ENCODE measurements at regions of chr22 and their contacts with region 1.

Region 1: GRCh38 chr22:39532215-39533071 is at the start of gene RPS19BP1:
- DNase-seq: peak; percentile 100
- ATAC-seq: peak; percentile 84
- H3K4me3 Mint-ChIP-seq: peak within 1 kb of the TSS; percentile 93
- H3K27ac Mint-ChIP-seq: peak within 1 kb of the TSS; percentile 93
- H3K4me1 Mint-ChIP-seq: peaks cover 59% of the 10 kb centered on the region
- H3K27me3 Mint-ChIP-seq: no peaks in the 10 kb centered on the region
- total RNA-seq, gene RPS19BP1: 64.8 to 81.6 TPM

Region 2: GRCh38 chr22:39170825-39171622 is 361.4 kb before region 1 on chr22:
- CTCF ChIA-PET with region 1: interaction called, 21 read pairs
- DNase-seq: peak; percentile 87
- ATAC-seq: peak; percentile 82
- H3K4me3 Mint-ChIP-seq: peak overlapping the region; percentile 36
- H3K27ac Mint-ChIP-seq: peak overlapping the region; percentile 70
- H3K4me1 Mint-ChIP-seq: peaks cover 36% of the 10 kb centered on the region
- H3K27me3 Mint-ChIP-seq: peaks cover 23% of the 10 kb centered on the region

Region 3: GRCh38 chr22:39490135-39490798 is 42.2 kb before region 1 on chr22:
- CTCF ChIA-PET with region 1: interaction called, 251 read pairs
- DNase-seq: peak; percentile 88
- ATAC-seq: peak; percentile 99
- H3K4me3 Mint-ChIP-seq: no peak overlapping the region
- H3K27ac Mint-ChIP-seq: no peak overlapping the region
- H3K4me1 Mint-ChIP-seq: peaks cover 18% of the 10 kb centered on the region
- H3K27me3 Mint-ChIP-seq: no peaks in the 10 kb centered on the region

Region 4: GRCh38 chr22:39514373-39514973 is 18.0 kb before region 1 on chr22:
- CTCF ChIA-PET with region 1: interaction called, 37 read pairs
- DNase-seq: peak; percentile 68
- ATAC-seq: no peak
- H3K4me3 Mint-ChIP-seq: no peak overlapping the region
- H3K27ac Mint-ChIP-seq: no peak overlapping the region
- H3K4me1 Mint-ChIP-seq: peaks cover 34% of the 10 kb centered on the region
- H3K27me3 Mint-ChIP-seq: no peaks in the 10 kb centered on the region

Region 5: GRCh38 chr22:39543095-39543494 is 10.7 kb after region 1 on chr22:
- CTCF ChIA-PET with region 1: interaction called, 30 read pairs
- DNase-seq: no peak
- ATAC-seq: peak; percentile 42
- H3K4me3 Mint-ChIP-seq: no peak overlapping the region
- H3K27ac Mint-ChIP-seq: no peak overlapping the region
- H3K4me1 Mint-ChIP-seq: peaks cover 14% of the 10 kb centered on the region
- H3K27me3 Mint-ChIP-seq: peaks cover 37% of the 10 kb centered on the region

Region 6: GRCh38 chr22:39943337-39943736 is 410.9 kb after region 1 on chr22:
- CTCF ChIA-PET with region 1: interaction called, 11 read pairs
- DNase-seq: peak; percentile 62
- ATAC-seq: peak; percentile 17
- H3K4me3 Mint-ChIP-seq: peak overlapping the region; percentile 43
- H3K27ac Mint-ChIP-seq: peak overlapping the region; percentile 88
- H3K4me1 Mint-ChIP-seq: peaks cover 88% of the 10 kb centered on the region
- H3K27me3 Mint-ChIP-seq: no peaks in the 10 kb centered on the region

Region 7: GRCh38 chr22:40044102-40044869 is 511.8 kb after region 1 on chr22:
- CTCF ChIA-PET with region 1: interaction called, 478 read pairs
- DNase-seq: peak; percentile 99
- ATAC-seq: peak; percentile 90
- H3K4me3 Mint-ChIP-seq: peak overlapping the region; percentile 84
- H3K27ac Mint-ChIP-seq: peak overlapping the region; percentile 97
- H3K4me1 Mint-ChIP-seq: peaks cover 37% of the 10 kb centered on the region
- H3K27me3 Mint-ChIP-seq: peaks cover 6% of the 10 kb centered on the region